ENCODE measurements at regions of chr2 and their contacts with region 1.

Region 1: DNA sequence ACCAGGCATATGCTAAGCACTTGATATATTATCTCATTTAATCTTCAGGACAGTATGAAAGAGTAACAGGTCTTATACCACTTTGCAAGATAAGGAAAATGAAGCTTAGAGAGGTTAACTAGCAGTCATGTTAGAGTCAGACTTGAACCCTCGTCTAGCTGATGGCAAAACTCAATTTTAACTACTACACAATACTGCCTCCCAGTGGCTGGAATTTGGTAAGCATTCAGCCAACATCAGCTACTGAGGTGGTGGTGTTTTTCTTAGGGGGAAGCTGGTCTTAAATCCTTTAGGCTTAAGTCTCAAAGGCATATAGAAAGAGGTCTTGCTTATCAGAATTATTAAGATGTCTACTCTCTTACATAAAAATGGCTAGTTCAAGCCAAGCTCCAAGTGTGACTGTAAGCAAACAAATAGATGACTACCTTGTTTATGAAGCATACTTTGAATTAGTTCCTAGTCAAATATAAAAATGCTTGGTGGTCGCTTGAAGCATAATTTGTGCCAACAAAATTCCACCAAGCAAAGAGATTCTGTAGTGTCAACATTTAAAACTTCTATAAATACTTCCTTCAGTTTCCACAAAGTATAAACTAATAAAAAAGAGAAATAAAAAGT is 325.4 kb upstream of the FIGN start:
- DNase-seq: peak; percentile 13
- ATAC-seq: peak; percentile 84
- H3K4me3 ChIP-seq: no peak overlapping the region
- H3K27ac ChIP-seq: no peak overlapping the region
- H3K4me1 ChIP-seq: no peaks in the 10 kb centered on the region
- H3K27me3 ChIP-seq: peaks cover 0 to 2% of the 10 kb centered on the region in 2 experiments; a peak in 1 of 4 replicates
- CTCF ChIP-seq: peak; percentile 62 to 78 (median 69); a peak in 5 of 6 replicates
- EP300 ChIP-seq: no peak
- POLR2A ChIP-seq: no peak
- RAD21 ChIP-seq: peak; percentile 85

Region 2: DNA sequence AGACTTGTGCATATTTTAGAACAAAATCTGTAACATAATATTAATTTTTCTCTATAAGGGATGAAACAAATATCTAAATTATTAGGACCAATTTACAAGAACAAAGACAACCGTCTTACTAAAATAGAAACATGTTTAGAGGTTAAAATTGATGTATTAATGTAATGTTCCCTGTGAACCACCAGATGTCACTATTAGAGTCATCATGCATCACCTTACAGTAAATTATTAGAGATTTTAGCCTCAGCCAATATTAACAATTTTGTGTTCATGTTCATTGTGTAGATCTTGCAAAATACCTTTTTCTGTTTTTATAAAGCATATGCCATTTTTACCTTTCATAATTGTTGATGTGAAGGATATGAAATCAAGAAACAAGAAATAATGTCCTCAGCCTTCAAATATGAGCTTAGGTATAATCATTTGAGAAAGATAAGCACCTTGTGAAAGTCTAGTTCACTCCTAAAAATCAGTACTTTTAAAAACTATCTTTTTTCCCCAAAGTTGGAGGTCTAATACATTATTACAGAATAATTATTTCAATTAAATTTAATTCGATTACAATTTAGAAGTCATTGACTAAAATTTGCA is 878.4 kb before region 1 on chr2:
- CTCF ChIA-PET with region 1: interaction called, 14 read pairs
- POLR2A ChIA-PET with region 1: no interaction called
- RAD21 ChIA-PET with region 1: interaction called, 4 read pairs
- SMC1A ChIA-PET with region 1: interaction called, 9 read pairs
- in situ Hi-C with region 1: loop called (anchors 10 kb)
- intact Hi-C with region 1: no loop called
- DNase-seq: no peak
- ATAC-seq: peak; percentile 51; the same call in 2 of the 3 replicates
- H3K4me3 ChIP-seq: no peak overlapping the region
- H3K27ac ChIP-seq: no peak overlapping the region
- H3K4me1 ChIP-seq: no peaks in the 10 kb centered on the region
- H3K27me3 ChIP-seq: no peaks in the 10 kb centered on the region
- CTCF ChIP-seq: peak; percentile 36 to 55 (median 45); a peak in 4 of 6 replicates
- EP300 ChIP-seq: no peak
- POLR2A ChIP-seq: no peak
- RAD21 ChIP-seq: peak; percentile 37

Region 3: DNA sequence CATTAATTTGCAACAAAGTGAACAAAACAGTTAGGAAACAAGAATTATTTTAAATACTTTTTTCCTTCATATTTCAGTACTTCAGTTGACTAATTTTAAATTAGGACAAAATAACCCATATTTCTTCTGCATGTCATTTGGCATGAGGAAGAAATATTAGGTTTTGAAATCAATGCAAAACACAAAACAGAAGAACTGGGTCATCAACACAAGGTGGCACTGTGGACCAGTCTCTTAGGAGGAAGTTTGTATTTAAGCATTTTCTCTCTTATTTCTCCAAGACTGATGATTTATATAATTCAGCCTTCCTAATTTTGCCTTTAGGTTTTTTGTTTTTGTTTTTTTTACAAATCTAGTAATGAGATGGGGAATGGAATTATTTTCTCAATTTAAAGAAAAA is 869.9 kb before region 1 on chr2:
- CTCF ChIA-PET with region 1: interaction called, 18 read pairs
- POLR2A ChIA-PET with region 1: no interaction called
- RAD21 ChIA-PET with region 1: interaction called, 3 read pairs
- SMC1A ChIA-PET with region 1: interaction called, 8 read pairs
- in situ Hi-C with region 1: loop called (anchors 10 kb)
- intact Hi-C with region 1: loop called (anchors 5 kb)
- DNase-seq: no peak
- ATAC-seq: peak; percentile 57; the same call in 2 of the 3 replicates
- H3K4me3 ChIP-seq: no peak overlapping the region
- H3K27ac ChIP-seq: no peak overlapping the region
- H3K4me1 ChIP-seq: no peaks in the 10 kb centered on the region
- H3K27me3 ChIP-seq: no peaks in the 10 kb centered on the region
- CTCF ChIP-seq: peak; percentile 44 to 54 (median 49); a peak in 5 of 6 replicates
- EP300 ChIP-seq: no peak
- POLR2A ChIP-seq: no peak
- RAD21 ChIP-seq: peak; percentile 54

Region 4: DNA sequence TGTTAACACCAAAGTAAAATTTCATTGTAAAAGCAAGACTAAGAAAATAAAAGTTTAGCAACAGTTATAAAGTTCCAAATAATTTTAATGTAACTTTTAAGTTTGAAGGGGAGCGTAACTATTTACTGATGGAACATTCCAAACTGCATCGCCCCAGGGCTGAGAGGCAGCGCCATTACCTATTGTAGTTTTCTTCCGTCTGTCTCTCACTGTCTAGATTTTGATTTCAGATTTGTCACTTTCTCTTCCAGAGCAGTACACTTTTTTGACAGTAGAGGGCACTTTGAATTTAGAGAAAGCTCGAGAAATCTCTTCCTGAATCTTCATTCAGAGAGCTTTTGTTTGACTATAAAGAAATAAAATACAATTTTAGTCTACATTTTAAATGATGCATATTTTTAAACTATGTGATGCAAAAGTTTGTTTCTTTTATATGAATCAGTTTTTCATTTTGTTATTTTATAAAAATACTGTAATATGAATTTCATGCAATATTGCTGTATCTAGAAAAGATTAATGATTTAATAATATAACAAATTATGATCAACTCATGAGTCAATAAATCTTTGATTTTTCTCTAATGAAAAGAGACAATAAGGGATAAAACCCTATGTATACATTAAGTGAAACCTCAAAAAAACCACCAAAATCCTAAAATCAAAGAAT is 715.2 kb before region 1 on chr2:
- CTCF ChIA-PET with region 1: interaction called, 32 read pairs
- POLR2A ChIA-PET with region 1: no interaction called
- RAD21 ChIA-PET with region 1: interaction called, 13 read pairs
- SMC1A ChIA-PET with region 1: interaction called, 21 read pairs
- in situ Hi-C with region 1: loop called (anchors 10 kb)
- intact Hi-C with region 1: loop called (anchors 1 kb)
- DNase-seq: peak; percentile 25
- ATAC-seq: peak; percentile 77
- H3K4me3 ChIP-seq: no peak overlapping the region
- H3K27ac ChIP-seq: no peak overlapping the region
- H3K4me1 ChIP-seq: no peaks in the 10 kb centered on the region
- H3K27me3 ChIP-seq: no peaks in the 10 kb centered on the region; a peak in 2 of 4 replicates
- CTCF ChIP-seq: peak; percentile 61 to 73 (median 70); a peak in 5 of 6 replicates
- EP300 ChIP-seq: no peak
- POLR2A ChIP-seq: no peak
- RAD21 ChIP-seq: peak; percentile 70

Region 5: GRCh38 chr2:163834221-163834620 is 227.0 kb before region 1 on chr2:
- CTCF ChIA-PET with region 1: no interaction called
- POLR2A ChIA-PET with region 1: no interaction called
- RAD21 ChIA-PET with region 1: no interaction called
- SMC1A ChIA-PET with region 1: no interaction called
- in situ Hi-C with region 1: no loop called
- intact Hi-C with region 1: loop called (anchors 10 kb)
- DNase-seq: no peak
- ATAC-seq: no peak
- H3K4me3 ChIP-seq: no peak overlapping the region
- H3K27ac ChIP-seq: no peak overlapping the region
- H3K4me1 ChIP-seq: no peaks in the 10 kb centered on the region
- H3K27me3 ChIP-seq: no peaks in the 10 kb centered on the region
- CTCF ChIP-seq: no peak
- EP300 ChIP-seq: no peak
- POLR2A ChIP-seq: no peak
- RAD21 ChIP-seq: no peak

Region 6: GRCh38 chr2:163863046-163863445 is 198.2 kb before region 1 on chr2:
- CTCF ChIA-PET with region 1: no interaction called
- POLR2A ChIA-PET with region 1: no interaction called
- RAD21 ChIA-PET with region 1: no interaction called
- SMC1A ChIA-PET with region 1: no interaction called
- in situ Hi-C with region 1: no loop called
- intact Hi-C with region 1: no loop called
- DNase-seq: no peak
- ATAC-seq: no peak
- H3K4me3 ChIP-seq: no peak overlapping the region
- H3K27ac ChIP-seq: no peak overlapping the region
- H3K4me1 ChIP-seq: no peaks in the 10 kb centered on the region
- H3K27me3 ChIP-seq: no peaks in the 10 kb centered on the region
- CTCF ChIP-seq: no peak
- EP300 ChIP-seq: no peak
- POLR2A ChIP-seq: no peak
- RAD21 ChIP-seq: no peak

Region 7: DNA sequence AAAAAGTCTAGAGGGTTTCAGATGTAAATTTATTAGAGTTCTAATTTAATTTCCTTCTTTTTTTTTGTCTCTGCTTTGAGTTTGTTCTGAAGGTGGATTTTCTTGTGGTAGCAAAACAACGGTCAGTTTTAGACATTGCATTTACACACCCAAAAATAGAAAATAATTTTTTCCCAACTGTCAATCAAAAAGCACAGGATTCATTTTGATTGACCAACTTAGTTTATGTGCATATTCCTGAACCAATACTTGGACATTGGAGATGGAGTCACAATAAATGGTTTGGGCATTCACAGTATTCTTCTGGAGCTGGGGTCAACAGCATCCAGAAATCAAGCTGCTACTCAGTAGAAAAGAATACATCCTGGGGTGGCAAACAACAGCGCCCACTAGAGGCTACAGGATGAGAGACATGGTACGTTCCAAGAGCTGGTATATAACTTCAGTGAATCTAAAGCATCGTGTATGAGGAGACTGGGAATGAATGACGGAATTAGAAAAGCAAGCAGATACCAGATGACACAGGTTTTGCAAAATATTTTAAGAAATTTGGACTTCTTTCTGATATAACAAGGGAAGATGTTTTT is 182.6 kb before region 1 on chr2:
- CTCF ChIA-PET with region 1: interaction called, 7 read pairs
- POLR2A ChIA-PET with region 1: no interaction called
- RAD21 ChIA-PET with region 1: interaction called, 3 read pairs
- SMC1A ChIA-PET with region 1: interaction called, 5 read pairs
- in situ Hi-C with region 1: no loop called
- intact Hi-C with region 1: loop called (anchors 2 kb)
- DNase-seq: no peak
- ATAC-seq: peak; percentile 86
- H3K4me3 ChIP-seq: no peak overlapping the region
- H3K27ac ChIP-seq: no peak overlapping the region
- H3K4me1 ChIP-seq: no peaks in the 10 kb centered on the region
- H3K27me3 ChIP-seq: no peaks in the 10 kb centered on the region
- CTCF ChIP-seq: peak; percentile 50 to 65 (median 61); a peak in 5 of 6 replicates
- EP300 ChIP-seq: no peak
- POLR2A ChIP-seq: no peak
- RAD21 ChIP-seq: peak; percentile 49; the same call in 1 of the 2 replicates

Region 8: GRCh38 chr2:164080486-164080885 is 19.2 kb after region 1 on chr2:
- CTCF ChIA-PET with region 1: no interaction called
- POLR2A ChIA-PET with region 1: no interaction called
- RAD21 ChIA-PET with region 1: no interaction called
- SMC1A ChIA-PET with region 1: no interaction called
- in situ Hi-C with region 1: no loop called
- intact Hi-C with region 1: no loop called
- DNase-seq: no peak
- ATAC-seq: no peak
- H3K4me3 ChIP-seq: no peak overlapping the region
- H3K27ac ChIP-seq: no peak overlapping the region
- H3K4me1 ChIP-seq: no peaks in the 10 kb centered on the region
- H3K27me3 ChIP-seq: no peaks in the 10 kb centered on the region
- CTCF ChIP-seq: no peak
- EP300 ChIP-seq: no peak
- POLR2A ChIP-seq: no peak
- RAD21 ChIP-seq: no peak

Region 9: GRCh38 chr2:164205347-164205746 is 144.1 kb after region 1 on chr2:
- CTCF ChIA-PET with region 1: no interaction called
- POLR2A ChIA-PET with region 1: no interaction called
- RAD21 ChIA-PET with region 1: no interaction called
- SMC1A ChIA-PET with region 1: no interaction called
- in situ Hi-C with region 1: no loop called
- intact Hi-C with region 1: no loop called
- DNase-seq: no peak
- ATAC-seq: no peak
- H3K4me3 ChIP-seq: no peak overlapping the region
- H3K27ac ChIP-seq: no peak overlapping the region
- H3K4me1 ChIP-seq: no peaks in the 10 kb centered on the region
- H3K27me3 ChIP-seq: no peaks in the 10 kb centered on the region
- CTCF ChIP-seq: no peak
- EP300 ChIP-seq: no peak
- POLR2A ChIP-seq: no peak
- RAD21 ChIP-seq: no peak